ENCODE measurements at regions of chr6 and their contacts with region 1.

Region 1: DNA sequence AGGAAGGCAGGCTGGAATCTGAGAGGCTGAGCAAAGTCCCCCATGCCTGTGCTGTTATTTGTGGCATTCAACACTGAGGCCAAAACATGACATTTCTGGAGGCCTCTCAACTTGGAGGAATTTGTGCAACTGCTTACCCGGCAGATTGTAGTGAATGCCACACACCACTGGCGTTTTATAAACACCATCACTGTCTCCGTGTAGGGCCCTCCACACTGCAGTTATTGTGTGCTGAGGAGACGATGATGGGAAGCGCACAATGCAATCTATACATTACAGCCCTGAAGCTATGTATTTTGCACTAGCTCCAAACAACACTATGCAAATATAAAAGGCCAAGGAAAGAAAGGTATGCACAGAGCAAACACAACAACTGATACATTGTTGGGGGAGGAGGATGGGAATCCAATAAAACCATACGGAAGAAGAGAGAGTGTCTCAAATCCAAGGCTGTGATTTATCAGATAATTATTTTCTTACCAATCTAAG is 106.5 kb downstream of the SMLR1 start:
- DNase-seq: no peak
- CTCF ChIP-seq: no peak

Region 2: GRCh38 chr6:130922922-130923321 is 10.8 kb before region 1 on chr6:
- CTCF ChIA-PET with region 1: interaction called, 12 read pairs
- POLR2A ChIA-PET with region 1: interaction called, 3 read pairs
- DNase-seq: no peak
- CTCF ChIP-seq: no peak

Region 3: GRCh38 chr6:130947464-130947863 is 13.7 kb after region 1 on chr6:
- CTCF ChIA-PET with region 1: no interaction called
- POLR2A ChIA-PET with region 1: no interaction called
- DNase-seq: no peak
- CTCF ChIP-seq: no peak

Measured in GM10248 (cell line).